IMR-90 (cell line): ENCODE measurements at regions of chr11 and their contacts with region 1.

Region 1: DNA sequence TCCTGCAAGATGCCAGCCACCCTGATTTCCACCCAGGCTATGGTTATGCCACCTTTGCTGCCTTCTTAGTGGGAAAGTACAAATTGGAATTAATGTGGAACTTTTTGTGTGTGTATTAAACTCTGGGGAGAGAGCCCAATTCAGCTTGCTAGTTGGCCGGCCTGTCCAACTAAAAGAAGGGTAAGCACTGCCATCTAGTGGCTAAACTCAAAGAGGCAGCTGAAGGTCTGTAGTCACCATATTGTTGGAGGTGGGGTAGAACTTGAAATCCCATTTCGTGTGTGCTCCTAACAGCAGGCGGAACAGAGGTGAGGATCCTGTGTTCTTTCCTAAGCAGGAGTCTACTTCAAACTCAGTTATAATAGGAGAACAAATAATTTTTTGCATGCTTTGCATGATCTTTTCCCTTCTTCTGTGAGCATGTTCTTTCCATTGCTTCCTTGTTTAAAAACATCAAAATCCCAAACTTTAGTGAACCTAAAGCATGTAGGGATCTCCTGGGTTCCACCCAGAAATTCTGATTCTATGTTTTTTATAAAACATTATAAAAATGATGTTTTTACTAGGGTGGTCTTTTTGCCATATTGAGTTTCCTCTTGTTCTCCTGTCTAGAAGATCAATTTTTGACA is 138.8 kb upstream of the SORL1-AS1 start:
- DNase-seq: peak; percentile 80
- ATAC-seq: peak; percentile 59
- H3K4me3 ChIP-seq: no peak overlapping the region
- H3K27ac ChIP-seq: no peak overlapping the region
- H3K4me1 ChIP-seq: peaks cover 17% of the 10 kb centered on the region
- H3K27me3 ChIP-seq: no peaks in the 10 kb centered on the region
- CTCF ChIP-seq: peak; percentile 93
- POLR2A ChIP-seq: peak; percentile 41; the same call in 1 of the 2 replicates
- RAD21 ChIP-seq: peak; percentile 96

Region 2: GRCh38 chr11:120335908-120336640 is 1255.4 kb before region 1 on chr11 and contains the start of gene ARHGEF12:
- CTCF ChIA-PET with region 1: no interaction called
- POLR2A ChIA-PET with region 1: no interaction called
- dilution Hi-C with region 1: no loop called
- in situ Hi-C with region 1: no loop called
- intact Hi-C with region 1: loop called (anchors 10 kb)
- DNase-seq: peak; percentile 97
- ATAC-seq: peak; percentile 61
- H3K4me3 ChIP-seq: peak within 1 kb of the TSS; percentile 93
- H3K27ac ChIP-seq: peak within 1 kb of the TSS; percentile 92
- H3K4me1 ChIP-seq: peaks cover 6% of the 10 kb centered on the region
- H3K27me3 ChIP-seq: no peaks in the 10 kb centered on the region
- CTCF ChIP-seq: peak; percentile 31; the same call in 1 of the 2 replicates
- POLR2A ChIP-seq: peak; percentile 73
- RAD21 ChIP-seq: no peak
- total RNA-seq, gene ARHGEF12: 115 and 131 TPM in 2 replicates

Region 3: GRCh38 chr11:121112498-121113455 is 478.7 kb before region 1 on chr11:
- CTCF ChIA-PET with region 1: no interaction called
- POLR2A ChIA-PET with region 1: no interaction called
- dilution Hi-C with region 1: no loop called
- in situ Hi-C with region 1: no loop called
- intact Hi-C with region 1: loop called (anchors 5 kb)
- DNase-seq: peak; percentile 82
- ATAC-seq: peak; percentile 99
- H3K4me3 ChIP-seq: no peak overlapping the region
- H3K27ac ChIP-seq: no peak overlapping the region
- H3K4me1 ChIP-seq: no peaks in the 10 kb centered on the region
- H3K27me3 ChIP-seq: peaks cover 30% of the 10 kb centered on the region
- CTCF ChIP-seq: peak; percentile 75
- POLR2A ChIP-seq: no peak
- RAD21 ChIP-seq: peak; percentile 76

Region 4: DNA sequence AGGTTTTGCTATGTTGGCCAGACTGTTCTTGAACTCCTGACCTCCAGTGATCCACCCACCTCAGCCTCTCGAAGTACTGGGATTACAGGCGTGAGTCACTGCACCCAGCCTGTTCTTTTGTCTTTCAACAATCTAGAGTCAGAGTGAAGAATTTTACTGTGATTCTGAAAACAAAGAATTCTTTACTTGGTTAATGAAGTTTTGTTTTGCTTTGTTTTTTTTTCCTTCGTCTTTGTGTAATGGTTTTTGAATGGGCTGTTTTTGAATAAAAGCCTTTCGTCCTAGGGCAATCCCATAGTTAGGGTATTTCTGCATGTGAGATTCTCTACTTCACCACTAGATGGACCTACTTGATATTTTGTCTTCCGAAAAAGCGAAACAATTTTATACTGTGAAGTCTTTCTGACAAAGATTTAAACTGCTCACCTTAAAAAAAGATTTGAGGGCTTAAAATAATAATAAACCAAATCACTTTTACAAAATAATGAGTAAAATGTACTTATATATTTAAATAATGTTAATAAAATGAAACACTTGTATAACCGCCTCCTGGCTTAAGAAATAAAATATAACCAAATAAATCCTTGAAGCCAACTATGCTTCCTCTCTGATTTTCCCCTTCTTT is 342.4 kb before region 1 on chr11:
- CTCF ChIA-PET with region 1: interaction called, 4 read pairs
- POLR2A ChIA-PET with region 1: no interaction called
- dilution Hi-C with region 1: no loop called
- in situ Hi-C with region 1: no loop called
- intact Hi-C with region 1: loop called (anchors 1 kb)
- DNase-seq: peak; percentile 48
- ATAC-seq: peak; percentile 94
- H3K4me3 ChIP-seq: no peak overlapping the region
- H3K27ac ChIP-seq: no peak overlapping the region
- H3K4me1 ChIP-seq: no peaks in the 10 kb centered on the region
- H3K27me3 ChIP-seq: peaks cover 3% of the 10 kb centered on the region
- CTCF ChIP-seq: peak; percentile 67
- POLR2A ChIP-seq: no peak
- RAD21 ChIP-seq: peak; percentile 47

Region 5: DNA sequence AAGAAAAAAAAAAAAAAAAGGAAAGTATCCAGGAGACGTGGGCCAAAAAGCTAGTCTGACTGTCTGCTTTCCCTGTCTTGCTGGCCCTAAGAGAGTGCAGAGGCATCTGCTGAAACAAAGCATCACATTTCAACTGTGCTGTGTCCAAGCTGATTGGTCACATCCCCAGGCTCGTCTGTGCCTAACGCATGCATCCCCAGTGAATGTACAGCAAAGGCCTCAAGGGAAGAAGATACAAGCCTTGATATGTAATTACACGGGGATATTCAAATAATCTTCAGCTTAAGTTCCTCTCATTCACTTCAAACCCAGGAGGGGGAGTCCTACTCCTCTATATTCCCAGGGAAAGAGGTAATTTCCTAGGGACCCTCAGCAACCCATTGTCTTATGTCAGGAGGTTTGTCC is 144.8 kb before region 1 on chr11:
- CTCF ChIA-PET with region 1: interaction called, 4 read pairs
- POLR2A ChIA-PET with region 1: no interaction called
- dilution Hi-C with region 1: no loop called
- in situ Hi-C with region 1: no loop called
- intact Hi-C with region 1: loop called (anchors 2 kb)
- DNase-seq: peak; percentile 73
- ATAC-seq: peak; percentile 93
- H3K4me3 ChIP-seq: no peak overlapping the region
- H3K27ac ChIP-seq: no peak overlapping the region
- H3K4me1 ChIP-seq: no peaks in the 10 kb centered on the region; the same call in 1 of the 2 replicates
- H3K27me3 ChIP-seq: peaks cover 28% of the 10 kb centered on the region
- CTCF ChIP-seq: peak; percentile 32
- POLR2A ChIP-seq: no peak
- RAD21 ChIP-seq: peak; percentile 37

Region 6: GRCh38 chr11:121655537-121656327 is 64.2 kb after region 1 on chr11:
- CTCF ChIA-PET with region 1: interaction called, 8 read pairs
- POLR2A ChIA-PET with region 1: interaction called, 7 read pairs
- dilution Hi-C with region 1: no loop called
- in situ Hi-C with region 1: no loop called
- intact Hi-C with region 1: loop called (anchors 2 kb)
- DNase-seq: peak; percentile 99
- ATAC-seq: peak; percentile 88
- H3K4me3 ChIP-seq: peak overlapping the region; percentile 28
- H3K27ac ChIP-seq: peak overlapping the region; percentile 97
- H3K4me1 ChIP-seq: peaks cover 28% of the 10 kb centered on the region
- H3K27me3 ChIP-seq: no peaks in the 10 kb centered on the region
- CTCF ChIP-seq: peak; percentile 97
- POLR2A ChIP-seq: peak; percentile 64; the same call in 1 of the 2 replicates
- RAD21 ChIP-seq: peak; percentile 99

Region 7: GRCh38 chr11:122202951-122203456 is 611.5 kb after region 1 on chr11:
- CTCF ChIA-PET with region 1: no interaction called
- POLR2A ChIA-PET with region 1: no interaction called
- dilution Hi-C with region 1: no loop called
- in situ Hi-C with region 1: no loop called
- intact Hi-C with region 1: loop called (anchors 5 kb)
- DNase-seq: peak; percentile 71
- ATAC-seq: peak; percentile 73
- H3K4me3 ChIP-seq: peak overlapping the region; percentile 54
- H3K27ac ChIP-seq: peak overlapping the region; percentile 98
- H3K4me1 ChIP-seq: peaks cover 40% of the 10 kb centered on the region
- H3K27me3 ChIP-seq: no peaks in the 10 kb centered on the region
- CTCF ChIP-seq: peak; percentile 95
- POLR2A ChIP-seq: 0 out of 2 replicates have a peak, but pooled peaks have one; percentile 40
- RAD21 ChIP-seq: peak; percentile 95